ENCODE measurements at regions of chr3 and their contacts with region 1.

Region 1: GRCh38 chr3:149717391-149718056 is 34.8 kb downstream of the COMMD2 start:
- DNase-seq: peak; percentile 37
- H3K4me3 ChIP-seq: no peak overlapping the region
- CTCF ChIP-seq: peak; percentile 60

Region 2: DNA sequence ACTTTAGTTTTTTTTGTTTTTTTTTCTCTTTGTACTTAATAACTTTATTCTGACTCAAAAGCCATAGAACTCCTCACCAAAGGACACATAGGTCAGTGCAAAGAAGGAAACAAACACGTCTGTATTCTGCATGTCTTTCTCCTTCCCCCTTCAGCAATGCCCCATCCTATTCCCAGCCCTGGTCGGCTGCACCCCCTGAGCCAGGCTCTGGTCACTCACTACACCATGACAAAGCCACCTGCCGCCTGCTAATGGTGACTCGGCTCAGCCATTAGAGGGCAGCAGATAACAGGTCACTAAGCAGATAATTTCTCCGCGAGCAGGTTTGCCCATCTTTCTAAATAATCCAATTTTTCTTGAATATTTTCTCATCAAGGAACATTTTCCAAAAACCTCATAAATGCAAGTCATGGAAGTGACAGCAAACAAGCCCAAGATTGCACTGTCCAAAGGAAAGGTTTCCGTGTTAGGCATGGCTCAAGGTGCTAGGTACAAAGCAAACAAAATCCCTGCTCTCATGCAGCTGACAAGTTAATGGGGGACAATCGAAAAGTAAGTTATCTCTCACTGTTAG is 205.2 kb before region 1 on chr3:
- CTCF ChIA-PET with region 1: interaction called, 104 read pairs
- POLR2A ChIA-PET with region 1: no interaction called
- DNase-seq: no peak
- H3K4me3 ChIP-seq: no peak overlapping the region
- CTCF ChIP-seq: peak; percentile 75

Region 3: DNA sequence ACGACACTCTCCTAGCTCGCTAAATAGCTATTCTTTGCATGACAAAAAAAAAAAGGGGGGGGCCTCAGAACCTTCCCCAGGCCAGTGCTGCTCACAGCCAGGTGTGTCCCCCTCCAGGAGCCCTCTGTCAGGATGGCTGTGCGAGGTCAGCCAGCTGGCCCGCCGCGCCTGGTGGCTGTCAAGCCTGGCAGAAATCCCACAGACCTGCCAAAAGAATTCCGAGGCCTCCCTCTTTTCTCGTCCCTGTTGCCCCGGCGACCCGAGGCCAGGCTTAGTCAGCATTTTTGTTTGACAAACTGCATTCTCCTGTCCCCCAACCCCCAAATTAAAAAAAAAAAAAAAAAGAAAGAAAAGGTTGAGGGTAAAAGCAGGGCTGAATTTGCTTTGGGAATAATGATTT is 181.1 kb before region 1 on chr3:
- CTCF ChIA-PET with region 1: interaction called, 90 read pairs
- POLR2A ChIA-PET with region 1: no interaction called
- DNase-seq: no peak
- H3K4me3 ChIP-seq: no peak overlapping the region
- CTCF ChIP-seq: no peak

Region 4: DNA sequence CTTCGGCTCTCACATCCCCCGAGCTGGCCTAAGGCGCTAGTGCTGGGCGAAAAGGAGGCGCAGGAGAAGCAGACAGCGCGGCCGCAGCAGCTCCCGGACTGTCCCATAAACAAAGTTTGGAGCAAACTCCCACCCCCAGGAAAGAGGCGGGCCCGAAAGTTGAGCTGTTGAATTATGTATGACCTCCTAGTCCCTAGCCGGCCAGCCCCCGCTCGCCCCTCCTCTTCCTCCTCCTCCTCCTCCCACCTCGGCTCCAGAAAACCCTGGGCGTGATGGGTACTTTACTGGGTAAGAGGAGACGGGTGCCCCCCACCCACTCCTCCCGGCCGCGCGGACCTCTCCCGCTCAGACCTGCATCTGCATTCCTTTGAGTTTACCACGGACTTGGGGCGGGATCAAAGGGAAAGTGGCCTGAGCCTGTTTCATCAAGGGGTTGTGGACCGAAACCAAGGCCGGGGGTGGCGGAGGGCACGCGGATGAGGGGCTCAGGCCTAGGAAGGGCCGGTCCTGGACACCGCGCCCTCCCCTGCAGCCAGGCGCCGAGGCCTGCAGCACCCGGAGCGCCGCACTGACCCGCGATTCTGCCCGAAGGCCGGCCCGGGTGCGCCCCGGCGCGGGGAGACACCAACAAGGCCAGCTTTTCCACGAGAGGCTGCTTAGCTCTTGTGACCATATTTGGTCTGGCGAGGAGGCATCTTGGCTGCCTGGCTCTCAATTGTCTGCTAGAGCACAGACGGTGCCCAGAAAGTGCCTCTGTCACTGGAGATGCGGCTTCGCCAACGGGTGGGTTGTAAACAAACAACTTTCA is 59.4 kb before region 1 on chr3 and contains the start of gene WWTR1:
- CTCF ChIA-PET with region 1: interaction called, 10 read pairs
- POLR2A ChIA-PET with region 1: no interaction called
- DNase-seq: peak; percentile 79
- H3K4me3 ChIP-seq: peak within 1 kb of the TSS; percentile 93
- CTCF ChIP-seq: peak; percentile 22

Region 5: GRCh38 chr3:149736175-149736952 is 18.8 kb after region 1 on chr3:
- CTCF ChIA-PET with region 1: interaction called, 13 read pairs
- POLR2A ChIA-PET with region 1: no interaction called
- DNase-seq: peak; percentile 17
- H3K4me3 ChIP-seq: no peak overlapping the region
- CTCF ChIP-seq: no peak

Region 6: GRCh38 chr3:149969940-149970715 is 252.6 kb after region 1 on chr3:
- CTCF ChIA-PET with region 1: no interaction called
- POLR2A ChIA-PET with region 1: no interaction called
- DNase-seq: no peak
- H3K4me3 ChIP-seq: peak overlapping the region; percentile 83
- CTCF ChIP-seq: no peak

Measured in AG04449 (cell line).